ENCODE measurements at regions of chr6 and their contacts with region 1.

Region 1: GRCh38 chr6:47309291-47310130 is at the start of gene TNFRSF21:
- DNase-seq: peak; percentile 95
- H3K4me3 ChIP-seq: peak within 1 kb of the TSS; percentile 49 to 86 (median 80)
- H3K27ac ChIP-seq: peak within 1 kb of the TSS; percentile 60
- H3K4me1 ChIP-seq: peaks cover 16% of the 10 kb centered on the region
- H3K27me3 ChIP-seq: no peaks in the 10 kb centered on the region
- CTCF ChIP-seq: peak; percentile 93 to 94
- POLR2A ChIP-seq: peak; percentile 82
- total RNA-seq, gene TNFRSF21: 40.6 and 52.3 TPM in 2 replicates

Region 2: DNA sequence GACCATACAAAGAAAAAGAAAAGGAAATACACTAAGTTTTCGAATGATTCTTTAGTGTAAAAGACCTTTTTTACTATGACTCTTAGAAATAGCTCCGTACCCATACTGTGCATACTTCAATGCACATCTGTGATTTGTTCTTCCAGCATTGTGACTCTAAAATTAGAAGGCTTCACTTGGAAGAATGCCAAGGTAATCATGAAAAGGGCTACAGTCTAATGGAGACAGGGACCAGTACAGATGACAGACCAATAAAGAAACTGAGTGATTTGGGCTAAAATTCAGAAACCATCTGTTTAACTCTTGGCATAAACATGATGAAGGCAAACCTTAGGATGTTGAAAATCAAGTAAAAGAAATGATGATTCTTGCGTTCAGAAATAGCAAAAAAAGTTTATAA is 703.2 kb before region 1 on chr6:
- CTCF ChIA-PET with region 1: no interaction called
- POLR2A ChIA-PET with region 1: no interaction called
- dilution Hi-C with region 1: no loop called
- intact Hi-C with region 1: no loop called
- DNase-seq: no peak
- H3K4me3 ChIP-seq: no peak overlapping the region
- H3K27ac ChIP-seq: no peak overlapping the region
- H3K4me1 ChIP-seq: no peaks in the 10 kb centered on the region
- H3K27me3 ChIP-seq: no peaks in the 10 kb centered on the region
- CTCF ChIP-seq: no peak
- POLR2A ChIP-seq: no peak

Region 3: GRCh38 chr6:46876126-46876525 is 433.4 kb before region 1 on chr6:
- CTCF ChIA-PET with region 1: no interaction called
- POLR2A ChIA-PET with region 1: no interaction called
- dilution Hi-C with region 1: no loop called
- intact Hi-C with region 1: loop called (anchors 1 kb)
- DNase-seq: peak; percentile 97
- H3K4me3 ChIP-seq: no peak overlapping the region
- H3K27ac ChIP-seq: peak overlapping the region; percentile 53
- H3K4me1 ChIP-seq: peaks cover 18% of the 10 kb centered on the region
- H3K27me3 ChIP-seq: no peaks in the 10 kb centered on the region
- CTCF ChIP-seq: no peak
- POLR2A ChIP-seq: no peak

Region 4: GRCh38 chr6:47079638-47080037 is 229.9 kb before region 1 on chr6:
- CTCF ChIA-PET with region 1: interaction called, 9 read pairs
- POLR2A ChIA-PET with region 1: no interaction called
- dilution Hi-C with region 1: no loop called
- intact Hi-C with region 1: loop called (anchors 1 kb)
- DNase-seq: peak; percentile 25
- H3K4me3 ChIP-seq: no peak overlapping the region
- H3K27ac ChIP-seq: no peak overlapping the region
- H3K4me1 ChIP-seq: peaks cover 3% of the 10 kb centered on the region
- H3K27me3 ChIP-seq: peaks cover 10 to 17% of the 10 kb centered on the region in 2 experiments
- CTCF ChIP-seq: peak; percentile 10
- POLR2A ChIP-seq: no peak

Region 5: DNA sequence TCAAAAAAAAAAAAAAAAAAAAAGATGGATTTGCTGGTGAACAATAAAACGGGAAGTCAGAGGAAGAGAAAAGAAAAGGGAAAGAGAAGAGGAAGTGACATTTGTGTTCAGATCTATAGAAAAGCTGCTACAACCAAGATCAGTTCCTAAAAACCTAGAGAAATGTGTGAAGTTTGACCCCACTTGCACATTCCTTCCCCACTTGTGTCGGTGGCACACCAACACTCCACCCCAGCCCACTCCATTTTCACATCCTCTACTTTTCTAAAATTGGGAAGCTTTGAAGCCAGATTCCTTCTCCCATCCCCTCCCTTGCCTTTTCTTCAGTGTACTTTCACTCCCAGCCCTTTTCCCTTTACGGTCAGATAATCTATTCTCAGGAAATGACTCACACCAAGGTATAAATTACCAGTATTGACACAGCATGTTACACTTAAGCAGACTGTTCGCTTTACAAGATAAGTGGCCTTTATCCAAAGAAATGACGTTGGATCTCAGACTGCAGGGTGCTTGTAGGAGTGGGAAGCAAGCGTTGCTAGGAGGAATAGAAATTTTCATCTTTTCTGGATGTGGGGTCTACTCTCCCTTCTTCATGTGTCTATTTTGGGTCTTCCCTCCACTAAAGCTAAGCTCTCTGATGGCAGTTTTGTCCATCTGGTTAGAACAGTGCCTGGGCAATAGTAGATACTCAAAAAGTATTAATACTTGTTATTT is 174.9 kb before region 1 on chr6:
- CTCF ChIA-PET with region 1: no interaction called
- POLR2A ChIA-PET with region 1: no interaction called
- dilution Hi-C with region 1: no loop called
- intact Hi-C with region 1: loop called (anchors 1 kb)
- DNase-seq: peak; percentile 92
- H3K4me3 ChIP-seq: peak overlapping the region in 1 of 3 experiments; percentile 34
- H3K27ac ChIP-seq: peak overlapping the region; percentile 94
- H3K4me1 ChIP-seq: peaks cover 26% of the 10 kb centered on the region
- H3K27me3 ChIP-seq: no peaks in the 10 kb centered on the region
- CTCF ChIP-seq: no peak
- POLR2A ChIP-seq: no peak

Region 6: DNA sequence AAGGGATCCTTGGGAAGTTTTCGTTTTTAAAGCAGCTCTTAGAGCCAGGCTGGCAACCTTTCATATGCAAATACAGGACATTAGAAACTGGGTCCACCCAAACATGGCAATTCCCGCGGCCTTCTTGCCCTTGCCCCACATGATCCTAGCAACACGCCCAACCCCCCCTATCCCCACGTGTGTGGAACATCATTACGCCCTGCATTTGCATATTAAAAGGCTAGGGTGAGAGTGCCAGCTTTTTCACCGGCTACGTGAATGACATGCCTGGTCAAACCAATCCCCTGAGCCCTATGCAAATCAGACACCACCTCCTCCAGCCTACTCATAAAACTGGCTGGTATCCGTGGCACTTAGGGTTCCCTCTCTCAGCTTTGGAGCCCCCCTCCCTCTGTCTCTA is 87.9 kb before region 1 on chr6:
- CTCF ChIA-PET with region 1: no interaction called
- POLR2A ChIA-PET with region 1: no interaction called
- dilution Hi-C with region 1: no loop called
- intact Hi-C with region 1: no loop called
- DNase-seq: no peak
- H3K4me3 ChIP-seq: no peak overlapping the region
- H3K27ac ChIP-seq: no peak overlapping the region
- H3K4me1 ChIP-seq: no peaks in the 10 kb centered on the region
- H3K27me3 ChIP-seq: no peaks in the 10 kb centered on the region
- CTCF ChIP-seq: no peak
- POLR2A ChIP-seq: no peak

Region 7: DNA sequence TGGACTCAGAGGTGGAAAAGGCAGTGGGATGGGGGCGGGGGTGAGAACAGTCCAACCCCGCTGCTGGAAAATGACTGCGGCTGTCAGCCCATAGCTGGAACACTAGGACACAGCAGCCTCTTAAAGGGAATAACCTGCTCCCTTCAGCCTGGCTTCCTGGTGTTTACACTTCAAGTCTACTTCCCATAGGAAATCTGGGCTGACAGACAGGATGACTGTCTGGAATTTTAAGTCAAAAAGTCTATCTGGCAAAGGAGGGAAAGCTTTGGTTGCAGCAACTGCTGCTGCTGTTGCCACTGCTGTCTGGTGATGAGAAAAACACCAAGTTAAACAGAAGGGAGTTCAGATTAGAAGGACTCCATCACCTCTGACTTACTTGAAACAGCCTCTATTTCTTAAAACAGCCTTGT is 44.7 kb before region 1 on chr6:
- CTCF ChIA-PET with region 1: no interaction called
- POLR2A ChIA-PET with region 1: no interaction called
- dilution Hi-C with region 1: no loop called
- intact Hi-C with region 1: loop called (anchors 1 kb)
- DNase-seq: peak; percentile 97
- H3K4me3 ChIP-seq: no peak overlapping the region
- H3K27ac ChIP-seq: peak overlapping the region; percentile 76
- H3K4me1 ChIP-seq: peaks cover 63% of the 10 kb centered on the region
- H3K27me3 ChIP-seq: no peaks in the 10 kb centered on the region
- CTCF ChIP-seq: no peak
- POLR2A ChIP-seq: no peak

Measured in endothelial cell of umbilical vein (primary cell).